Right cardiac atrium (tissue), 5 donors: ENCODE measurements at regions of chr4 and their contacts with region 1.

Region 1: DNA sequence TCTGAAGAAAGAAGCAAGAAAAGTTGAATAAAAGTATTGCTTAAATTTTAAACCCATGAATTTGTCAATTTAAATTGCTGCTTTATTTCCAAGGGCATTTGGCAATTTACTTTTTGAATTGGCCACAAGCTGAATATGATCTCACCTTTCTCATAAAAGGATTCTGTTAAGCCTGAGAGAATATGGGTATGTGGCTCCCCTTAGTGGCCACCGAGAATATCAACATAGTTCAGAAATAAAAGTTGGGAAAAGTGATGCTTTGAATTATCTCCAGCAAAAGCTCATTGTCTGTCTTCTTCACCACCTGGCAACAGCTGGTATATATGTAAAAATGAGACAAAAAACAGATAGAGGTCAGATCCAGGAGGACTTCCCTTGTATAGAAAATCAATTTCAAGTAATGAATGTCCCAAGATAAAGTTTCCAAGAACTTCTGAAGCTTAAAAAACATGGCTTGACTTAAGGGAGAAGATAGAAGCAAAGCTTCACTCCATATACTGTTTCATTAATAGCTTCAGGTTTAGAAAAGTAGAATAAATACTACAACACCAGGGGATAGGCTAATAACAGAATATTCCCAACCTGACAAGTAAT is 290.7 kb upstream of the FAM241A start:
- DNase-seq: no peak
- ATAC-seq: no peak
- H3K4me3 ChIP-seq: no peak overlapping the region
- H3K27ac ChIP-seq: no peak overlapping the region
- H3K4me1 ChIP-seq: no peaks in the 10 kb centered on the region
- H3K27me3 ChIP-seq: no peaks in the 10 kb centered on the region

Region 2: DNA sequence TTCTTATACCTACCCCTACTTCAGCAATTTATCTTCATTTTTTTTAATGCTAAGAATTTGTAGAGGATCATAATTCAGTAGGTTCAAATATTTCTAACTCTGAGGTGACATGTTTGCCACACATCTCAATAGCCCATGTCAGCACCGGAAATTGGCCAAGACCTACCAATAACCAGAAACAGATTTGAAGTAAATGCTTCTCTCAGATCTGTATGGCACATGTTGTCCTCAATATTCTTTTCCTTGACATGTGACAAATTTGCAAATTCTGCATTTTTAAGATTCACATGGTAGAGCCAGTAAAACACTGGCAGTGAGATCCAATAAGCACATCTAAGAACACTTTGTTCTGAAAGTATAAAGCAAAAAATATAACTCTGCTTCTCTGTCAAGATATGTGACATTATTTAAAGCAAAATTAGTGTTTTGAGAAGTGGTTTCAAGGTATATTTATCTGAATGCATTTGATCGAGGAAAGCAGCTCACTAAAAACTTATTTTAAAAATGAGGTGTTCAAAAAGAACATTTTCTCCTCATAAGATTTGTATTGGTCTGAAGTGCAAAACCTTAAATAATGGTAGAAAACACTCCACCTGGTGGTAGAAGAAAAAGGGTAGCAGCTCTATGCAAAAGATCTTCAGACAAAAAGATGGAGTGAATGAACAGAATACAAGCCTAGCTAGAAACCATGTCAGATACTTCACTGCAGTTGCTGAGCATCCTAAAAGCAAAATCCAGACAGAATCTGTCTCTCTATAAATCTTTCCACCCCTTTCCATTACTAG is 223.2 kb before region 1 on chr4:
- intact Hi-C with region 1: loop called in 1 of 4 experiments (anchors 10 kb)
- DNase-seq: peak in 1 of 3 donors; percentile 7
- ATAC-seq: no peak
- H3K4me3 ChIP-seq: no peak overlapping the region
- H3K27ac ChIP-seq: no peak overlapping the region
- H3K4me1 ChIP-seq: no peaks in the 10 kb centered on the region
- H3K27me3 ChIP-seq: no peaks in the 10 kb centered on the region